MCF 10A (cell line): ENCODE measurements at regions of chr3 and their contacts with region 1.

Region 1: DNA sequence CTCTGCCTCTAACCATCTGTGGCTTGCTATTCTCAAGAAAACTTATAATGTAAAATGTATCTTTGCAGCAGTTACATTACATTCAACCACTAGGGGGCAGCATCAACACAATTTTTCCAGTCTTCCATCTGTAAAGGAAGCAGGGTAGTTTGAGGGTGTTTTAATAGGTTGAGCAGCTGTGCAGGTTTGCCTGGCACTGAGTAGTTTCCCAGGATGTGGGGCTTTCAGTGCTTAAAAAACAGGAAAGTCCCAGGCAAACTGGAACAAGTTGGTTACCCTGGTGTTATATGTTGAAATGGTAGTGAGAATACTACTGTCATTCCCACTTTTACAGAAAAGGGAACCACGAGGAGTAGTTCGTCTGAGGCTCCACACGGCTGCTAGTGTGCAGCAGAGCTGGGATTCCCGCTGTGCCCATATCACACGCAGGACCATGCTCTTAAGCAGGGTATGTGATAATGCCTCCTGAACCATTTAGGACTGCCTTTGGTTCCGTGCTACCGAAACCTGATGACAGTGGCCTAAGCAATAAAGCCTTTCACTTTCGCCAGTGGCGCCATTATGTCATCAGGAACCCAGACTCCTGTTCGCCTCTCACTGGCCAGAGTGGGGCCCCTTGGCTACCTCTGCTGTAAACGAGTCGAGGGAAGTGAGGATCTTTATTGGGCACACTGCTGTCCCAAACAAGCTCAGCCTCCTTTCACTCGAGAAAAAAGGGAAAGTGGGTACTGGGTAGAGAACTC is 64.7 kb upstream of the ZBTB38 start:
- DNase-seq: peak; percentile 79
- H3K4me3 Mint-ChIP-seq: no peak overlapping the region
- H3K27ac Mint-ChIP-seq: no peak overlapping the region
- H3K4me1 Mint-ChIP-seq: peaks cover 9% of the 10 kb centered on the region
- H3K27me3 Mint-ChIP-seq: no peaks in the 10 kb centered on the region
- CTCF ChIP-seq: peak; percentile 62

Region 2: GRCh38 chr3:141321109-141321497 is 17.5 kb after region 1 on chr3:
- CTCF ChIA-PET with region 1: interaction called, 11 read pairs
- POLR2A ChIA-PET with region 1: no interaction called
- intact Hi-C with region 1: no loop called
- DNase-seq: no peak
- H3K4me3 Mint-ChIP-seq: no peak overlapping the region
- H3K27ac Mint-ChIP-seq: no peak overlapping the region
- H3K4me1 Mint-ChIP-seq: no peaks in the 10 kb centered on the region
- H3K27me3 Mint-ChIP-seq: no peaks in the 10 kb centered on the region
- CTCF ChIP-seq: no peak

Region 3: GRCh38 chr3:141441381-141442364 is 138.0 kb after region 1 on chr3:
- CTCF ChIA-PET with region 1: interaction called, 49 read pairs
- POLR2A ChIA-PET with region 1: interaction called, 6 read pairs
- intact Hi-C with region 1: no loop called
- DNase-seq: peak; percentile 77
- H3K4me3 Mint-ChIP-seq: no peak overlapping the region
- H3K27ac Mint-ChIP-seq: peak overlapping the region; percentile 64
- H3K4me1 Mint-ChIP-seq: peaks cover 18% of the 10 kb centered on the region
- H3K27me3 Mint-ChIP-seq: no peaks in the 10 kb centered on the region
- CTCF ChIP-seq: peak; percentile 84

Region 4: DNA sequence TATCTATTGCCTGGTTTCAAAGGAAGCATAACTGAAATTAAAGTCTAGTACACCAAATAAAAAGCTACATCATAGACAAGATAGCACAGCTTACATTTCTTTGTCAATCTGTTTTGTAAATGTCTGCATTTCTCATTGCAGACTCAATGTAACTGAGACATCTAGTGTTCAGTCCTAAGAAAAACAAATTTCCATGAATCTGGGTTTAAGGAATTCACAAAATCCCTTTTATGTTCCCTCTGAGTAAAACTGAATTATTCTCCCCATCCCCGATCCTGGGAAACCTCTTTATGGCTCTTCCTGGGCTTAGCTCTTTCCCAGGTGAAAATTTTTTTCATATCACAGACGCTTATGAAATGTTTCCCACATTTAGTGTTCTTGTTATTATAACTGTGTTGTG is 161.6 kb after region 1 on chr3:
- CTCF ChIA-PET with region 1: interaction called, 392 read pairs
- POLR2A ChIA-PET with region 1: interaction called, 4 read pairs
- intact Hi-C with region 1: no loop called
- DNase-seq: no peak
- H3K4me3 Mint-ChIP-seq: no peak overlapping the region
- H3K27ac Mint-ChIP-seq: no peak overlapping the region
- H3K4me1 Mint-ChIP-seq: no peaks in the 10 kb centered on the region
- H3K27me3 Mint-ChIP-seq: no peaks in the 10 kb centered on the region
- CTCF ChIP-seq: peak; percentile 8